ENCODE measurements at regions of chr1 and their contacts with region 1.

Region 1: GRCh38 chr1:31133368-31133767 is 67.9 kb upstream of the PUM1 start:
- DNase-seq: no peak
- ATAC-seq: no peak

Region 2: DNA sequence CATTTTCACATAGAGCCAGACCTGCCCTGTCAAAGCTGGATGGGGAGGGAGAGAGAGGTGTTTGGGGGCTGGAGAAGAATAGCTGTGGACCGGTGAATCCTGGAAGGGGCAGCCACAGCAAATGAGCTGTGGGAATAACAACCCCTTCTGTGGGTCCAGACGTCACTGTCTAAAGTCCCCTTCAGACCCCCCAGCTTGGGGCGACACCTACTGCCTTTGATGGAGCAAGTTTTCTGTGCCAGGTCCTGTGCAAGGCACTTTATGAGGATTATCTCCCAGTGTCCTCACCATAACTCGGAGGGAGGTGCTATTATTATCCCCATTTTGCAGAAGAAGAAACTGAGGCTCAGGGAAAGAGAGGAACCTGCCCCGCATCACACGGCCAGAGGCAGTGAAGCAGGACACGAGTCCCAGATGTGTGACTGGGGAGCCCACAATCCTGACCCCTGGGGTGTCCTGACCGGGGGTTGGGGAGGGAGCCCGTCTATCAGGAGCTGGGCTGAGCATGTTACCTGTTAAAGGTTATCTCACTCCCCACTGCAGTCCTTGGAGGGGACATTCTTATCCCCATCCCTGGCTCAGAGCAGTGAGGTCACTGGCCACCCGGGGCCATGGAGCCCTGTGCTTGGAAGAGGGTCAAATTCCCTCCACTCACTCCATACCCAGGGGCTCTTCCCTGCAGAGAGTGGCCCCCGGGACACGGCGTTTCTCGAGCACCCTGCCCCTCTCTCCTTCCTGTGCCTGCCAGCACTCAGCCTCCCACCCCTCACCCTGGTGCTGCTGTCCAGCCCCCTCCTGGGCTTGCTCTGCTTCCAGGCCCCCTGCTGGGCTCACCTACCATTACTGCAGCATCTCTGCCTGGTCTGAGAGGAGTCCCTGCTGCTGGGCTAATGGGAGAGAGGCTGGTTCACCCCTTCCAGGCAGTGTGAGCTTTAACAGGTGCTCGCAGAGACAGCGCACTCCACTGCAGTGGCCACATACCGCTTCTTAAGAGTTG is 1764.1 kb before region 1 on chr1:
- intact Hi-C with region 1: loop called (anchors 5 kb)
- DNase-seq: peak; percentile 37
- ATAC-seq: no peak

Region 3: DNA sequence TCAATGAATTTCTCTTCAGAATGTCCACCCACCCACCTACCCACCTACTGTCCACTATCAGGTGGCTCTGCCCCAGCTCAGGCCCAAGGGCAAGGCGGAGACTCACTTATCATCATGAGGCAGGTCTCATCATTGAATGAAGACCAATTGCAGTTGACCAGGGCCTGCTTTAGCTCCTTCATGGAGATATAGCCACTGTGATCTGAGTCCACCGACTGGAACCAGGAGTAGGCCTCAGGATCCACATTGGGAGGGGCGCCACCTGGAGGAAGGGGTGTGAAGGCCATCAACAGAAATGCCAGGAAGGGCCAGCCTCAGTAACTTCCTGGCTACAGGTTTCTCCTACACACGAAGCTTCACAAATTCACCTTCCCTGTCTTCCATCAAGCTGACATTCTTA is 499.7 kb after region 1 on chr1:
- intact Hi-C with region 1: no loop called
- DNase-seq: no peak
- ATAC-seq: no peak

Region 4: DNA sequence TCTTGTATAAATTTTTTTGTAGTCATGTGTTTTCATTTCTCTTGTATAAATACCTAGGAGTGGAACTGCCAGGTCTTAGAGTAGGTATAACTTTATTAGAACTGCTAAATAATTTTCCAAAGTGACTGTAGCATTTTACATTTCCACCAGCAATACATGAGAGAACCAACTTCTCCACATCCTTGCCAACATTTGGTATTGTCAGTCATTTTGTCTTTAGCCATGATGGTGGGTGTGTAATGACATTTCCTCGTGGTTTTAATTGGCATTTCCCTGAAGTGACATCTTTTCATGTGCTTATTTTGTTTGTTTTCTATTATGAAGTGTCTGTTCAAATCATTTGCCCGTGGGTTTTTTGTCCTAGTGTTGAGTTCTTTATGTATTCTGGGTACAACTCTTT is 1435.6 kb after region 1 on chr1:
- intact Hi-C with region 1: no loop called
- DNase-seq: no peak
- ATAC-seq: no peak